ENCODE measurements at regions of chr7 and their contacts with region 1.

Region 1: DNA sequence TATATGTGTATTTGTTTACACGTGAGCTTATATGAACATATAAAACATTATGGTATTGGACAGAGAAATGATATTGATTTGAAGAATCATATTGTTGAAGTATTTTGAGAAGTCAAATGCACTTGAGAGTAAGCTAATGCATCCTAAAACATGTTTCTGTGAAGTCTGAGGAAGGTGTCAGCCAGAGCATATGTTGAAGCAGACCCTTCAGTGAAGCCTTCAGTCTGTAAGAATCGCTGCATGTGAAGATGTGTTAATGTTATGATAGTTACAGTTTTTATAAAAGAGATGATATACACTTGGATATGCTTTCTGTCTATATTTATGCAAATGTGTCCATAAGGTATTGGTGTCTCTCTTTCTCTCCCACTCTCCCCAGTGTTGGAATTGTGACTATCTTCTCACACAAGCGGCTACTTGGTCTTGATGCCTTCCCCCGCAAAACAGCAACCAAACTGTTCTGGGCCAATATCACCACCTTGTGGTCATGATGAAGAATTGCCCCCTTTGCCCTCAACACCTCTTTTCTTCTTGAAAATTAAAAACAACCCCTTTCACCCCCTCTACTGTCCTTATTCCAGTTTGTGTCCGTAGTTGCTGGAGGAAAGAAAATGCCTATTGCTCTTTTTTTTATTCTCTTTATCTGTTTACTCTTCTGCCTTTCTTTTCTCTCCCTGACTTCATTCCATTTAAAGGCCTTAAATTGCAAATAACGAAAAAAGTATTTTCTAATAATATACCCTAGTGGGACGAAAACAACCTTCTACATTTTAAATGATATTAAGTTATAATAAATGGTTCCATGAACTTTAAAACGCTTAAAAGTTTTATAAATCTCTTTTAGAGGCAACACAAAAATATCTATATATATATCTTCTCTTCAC is 64.9 kb downstream of the IKZF1 start:
- DNase-seq: peak; percentile 87
- H3K4me3 Mint-ChIP-seq: peak overlapping the region; percentile 55
- H3K27ac Mint-ChIP-seq: peak overlapping the region; percentile 45
- H3K4me1 Mint-ChIP-seq: peaks cover 85% of the 10 kb centered on the region
- H3K27me3 Mint-ChIP-seq: no peaks in the 10 kb centered on the region

Region 2: GRCh38 chr7:50142425-50143017 is 226.9 kb before region 1 on chr7:
- intact Hi-C with region 1: loop called (anchors 1 kb)
- DNase-seq: peak; percentile 82
- H3K4me3 Mint-ChIP-seq: peak overlapping the region; percentile 57
- H3K27ac Mint-ChIP-seq: peak overlapping the region; percentile 67
- H3K4me1 Mint-ChIP-seq: peaks cover 31% of the 10 kb centered on the region
- H3K27me3 Mint-ChIP-seq: peaks cover 14% of the 10 kb centered on the region

Region 3: GRCh38 chr7:50418086-50418515 is 48.7 kb after region 1 on chr7:
- intact Hi-C with region 1: loop called (anchors 1 kb)
- DNase-seq: peak; percentile 92
- H3K4me3 Mint-ChIP-seq: no peak overlapping the region
- H3K27ac Mint-ChIP-seq: no peak overlapping the region
- H3K4me1 Mint-ChIP-seq: peaks cover 31% of the 10 kb centered on the region
- H3K27me3 Mint-ChIP-seq: no peaks in the 10 kb centered on the region

Region 4: GRCh38 chr7:50793115-50793946 is 423.9 kb after region 1 on chr7:
- intact Hi-C with region 1: no loop called
- DNase-seq: peak; percentile 77
- H3K4me3 Mint-ChIP-seq: peak overlapping the region; percentile 54
- H3K27ac Mint-ChIP-seq: no peak overlapping the region
- H3K4me1 Mint-ChIP-seq: peaks cover 3% of the 10 kb centered on the region
- H3K27me3 Mint-ChIP-seq: peaks cover 57% of the 10 kb centered on the region